ENCODE measurements at regions of chr4 and their contacts with region 1.

Region 1: GRCh38 chr4:53576676-53577372 is 14.5 kb downstream of the LNX1 start:
- DNase-seq: peak; percentile 90
- ATAC-seq: peak; percentile 76
- H3K4me3 ChIP-seq: no peak overlapping the region
- H3K27ac ChIP-seq: peak overlapping the region; percentile 100
- H3K4me1 ChIP-seq: peaks cover 32% of the 10 kb centered on the region
- H3K27me3 ChIP-seq: no peaks in the 10 kb centered on the region
- CTCF ChIP-seq: no peak
- POLR2A ChIP-seq: no peak
- RAD21 ChIP-seq: no peak

Region 2: DNA sequence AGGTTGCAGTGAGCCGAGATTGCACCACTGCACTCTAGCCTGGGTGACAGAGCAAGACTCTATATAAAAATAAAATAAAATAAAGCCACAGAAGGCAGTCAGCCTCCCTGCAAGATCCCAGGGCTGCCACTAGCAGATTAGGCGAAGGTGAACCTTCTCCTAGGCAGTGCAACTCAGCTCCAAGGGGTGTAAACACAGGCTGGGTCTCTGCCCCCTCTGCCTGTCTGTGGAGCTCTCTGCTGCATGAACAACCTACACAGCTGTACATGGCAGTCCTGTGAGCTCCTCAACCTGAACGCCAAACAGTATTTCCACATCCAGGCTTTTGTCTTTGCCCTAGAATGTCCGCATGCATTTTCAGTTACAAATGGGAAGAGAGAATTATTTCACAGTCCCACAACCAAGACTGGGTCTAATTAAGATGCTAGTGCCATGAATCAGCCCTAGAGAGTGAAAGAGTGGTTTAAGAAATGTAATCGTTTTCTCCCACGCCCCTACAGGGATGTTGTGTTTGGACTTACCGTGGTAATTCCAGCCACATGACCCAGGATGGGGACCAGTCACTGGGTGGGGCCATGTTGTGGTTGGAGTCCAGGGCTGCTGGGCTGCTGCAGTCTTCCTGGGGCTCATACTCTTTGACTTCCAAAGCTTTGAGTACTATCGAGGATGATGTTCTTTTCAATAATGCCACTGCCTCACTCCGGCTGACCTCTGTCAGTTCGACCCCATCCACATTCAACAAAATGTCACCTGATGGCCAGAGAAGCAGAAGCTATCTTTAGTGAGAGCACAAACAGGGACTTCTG is 100.4 kb before region 1 on chr4:
- CTCF ChIA-PET with region 1: interaction called, 3 read pairs
- POLR2A ChIA-PET with region 1: no interaction called
- dilution Hi-C with region 1: no loop called
- in situ Hi-C with region 1: no loop called
- intact Hi-C with region 1: loop called (anchors 5 kb)
- DNase-seq: peak; percentile 98
- ATAC-seq: peak; percentile 87
- H3K4me3 ChIP-seq: no peak overlapping the region
- H3K27ac ChIP-seq: peak overlapping the region; percentile 93
- H3K4me1 ChIP-seq: peaks cover 20% of the 10 kb centered on the region
- H3K27me3 ChIP-seq: no peaks in the 10 kb centered on the region
- CTCF ChIP-seq: no peak
- POLR2A ChIP-seq: no peak
- RAD21 ChIP-seq: no peak

Region 3: GRCh38 chr4:53490965-53491622 is 85.7 kb before region 1 on chr4:
- CTCF ChIA-PET with region 1: no interaction called
- POLR2A ChIA-PET with region 1: no interaction called
- dilution Hi-C with region 1: no loop called
- in situ Hi-C with region 1: no loop called
- intact Hi-C with region 1: loop called (anchors 5 kb)
- DNase-seq: peak; percentile 93
- ATAC-seq: peak; percentile 80
- H3K4me3 ChIP-seq: no peak overlapping the region
- H3K27ac ChIP-seq: peak overlapping the region; percentile 93; the same call in 1 of the 2 replicates
- H3K4me1 ChIP-seq: peaks cover 11% of the 10 kb centered on the region
- H3K27me3 ChIP-seq: no peaks in the 10 kb centered on the region
- CTCF ChIP-seq: peak; percentile 71
- POLR2A ChIP-seq: no peak
- RAD21 ChIP-seq: peak; percentile 70

Region 4: DNA sequence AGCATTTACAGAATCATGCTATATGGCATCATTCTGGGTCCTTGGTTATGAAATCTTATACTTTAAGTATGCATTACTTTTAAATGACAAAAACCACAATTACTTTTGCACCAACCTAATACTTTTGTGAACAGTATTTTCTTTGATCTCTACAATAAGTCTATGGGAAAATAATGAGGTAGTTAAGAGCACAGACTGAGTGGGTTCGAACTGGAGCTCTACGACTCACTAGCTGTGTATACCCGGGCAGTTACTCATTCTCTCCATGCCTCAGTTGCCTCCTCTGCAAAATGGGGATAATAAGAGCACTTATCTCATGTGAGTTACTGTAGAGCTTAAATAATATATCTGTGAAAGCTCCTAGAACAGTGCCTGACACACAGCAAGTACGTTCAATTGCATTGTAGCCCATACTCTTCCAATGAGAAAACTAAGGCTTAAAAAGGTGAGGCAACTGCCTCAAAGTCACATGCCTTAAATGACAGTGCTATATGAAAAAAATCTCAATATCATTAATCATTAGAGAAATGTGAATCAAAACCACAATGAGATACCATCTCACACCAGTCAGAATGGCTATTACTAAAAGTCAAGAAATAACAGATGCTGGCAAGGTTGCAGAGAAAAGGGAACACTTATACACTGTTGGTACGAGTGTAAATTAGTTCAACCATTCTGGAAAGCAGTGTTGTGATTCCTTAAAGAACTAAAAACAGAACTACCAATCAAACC is 336.1 kb after region 1 on chr4:
- CTCF ChIA-PET with region 1: no interaction called
- POLR2A ChIA-PET with region 1: no interaction called
- dilution Hi-C with region 1: no loop called
- in situ Hi-C with region 1: no loop called
- intact Hi-C with region 1: no loop called
- DNase-seq: peak; percentile 39
- ATAC-seq: no peak
- H3K4me3 ChIP-seq: no peak overlapping the region
- H3K27ac ChIP-seq: no peak overlapping the region
- H3K4me1 ChIP-seq: peaks cover 16% of the 10 kb centered on the region
- H3K27me3 ChIP-seq: no peaks in the 10 kb centered on the region
- CTCF ChIP-seq: no peak
- POLR2A ChIP-seq: no peak
- RAD21 ChIP-seq: no peak

Region 5: GRCh38 chr4:53997901-53998300 is 421.1 kb after region 1 on chr4:
- CTCF ChIA-PET with region 1: no interaction called
- POLR2A ChIA-PET with region 1: no interaction called
- dilution Hi-C with region 1: no loop called
- in situ Hi-C with region 1: no loop called
- intact Hi-C with region 1: no loop called
- DNase-seq: no peak
- ATAC-seq: no peak
- H3K4me3 ChIP-seq: no peak overlapping the region
- H3K27ac ChIP-seq: no peak overlapping the region
- H3K4me1 ChIP-seq: no peaks in the 10 kb centered on the region
- H3K27me3 ChIP-seq: no peaks in the 10 kb centered on the region
- CTCF ChIP-seq: no peak
- POLR2A ChIP-seq: no peak
- RAD21 ChIP-seq: no peak

Region 6: DNA sequence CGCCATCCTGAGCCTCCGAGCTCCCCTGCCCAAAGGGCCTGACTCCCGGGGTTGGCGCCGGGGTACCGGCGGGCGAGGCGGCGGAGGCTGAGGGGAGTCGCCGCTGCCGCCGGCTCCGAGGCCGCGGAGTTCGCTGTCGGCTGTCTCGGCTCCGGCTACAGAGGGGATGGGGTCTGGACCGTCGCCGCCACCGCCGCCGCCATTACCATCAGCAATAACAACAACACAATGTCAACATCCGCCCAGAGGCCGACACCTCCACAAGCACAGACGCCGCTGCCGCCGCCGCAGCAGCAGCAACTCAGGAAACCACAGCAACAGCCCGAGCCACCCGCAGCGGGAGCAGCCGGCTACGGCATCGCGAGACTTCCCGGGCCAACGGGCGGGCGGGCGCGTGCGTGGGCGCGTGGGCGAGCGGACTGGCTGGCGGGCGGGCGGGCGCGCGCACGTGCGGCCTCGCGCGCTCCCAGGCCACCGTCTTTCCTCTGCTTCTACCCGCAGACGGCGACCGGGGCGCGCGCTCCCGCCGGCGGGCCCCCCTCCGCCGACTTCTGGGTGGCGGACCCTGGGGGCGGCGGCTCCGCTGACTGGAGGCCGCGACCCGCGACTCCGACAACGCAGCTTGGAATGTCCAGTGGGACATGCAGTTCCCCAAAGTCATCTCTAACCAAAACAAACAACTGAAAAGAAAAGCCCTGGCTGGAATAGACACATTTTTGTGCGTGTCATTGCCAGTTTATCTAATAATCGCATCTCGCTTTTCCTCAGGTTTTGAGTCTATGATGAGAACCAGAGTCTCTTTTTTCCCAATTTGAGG is 487.7 kb after region 1 on chr4 and contains the start of gene CHIC2:
- CTCF ChIA-PET with region 1: no interaction called
- POLR2A ChIA-PET with region 1: no interaction called
- dilution Hi-C with region 1: no loop called
- in situ Hi-C with region 1: no loop called
- intact Hi-C with region 1: no loop called
- DNase-seq: peak; percentile 92
- ATAC-seq: peak; percentile 88
- H3K4me3 ChIP-seq: peak within 1 kb of the TSS; percentile 81
- H3K27ac ChIP-seq: peak within 1 kb of the TSS; percentile 97
- H3K4me1 ChIP-seq: peaks cover 13% of the 10 kb centered on the region; the same call in 1 of the 2 replicates
- H3K27me3 ChIP-seq: no peaks in the 10 kb centered on the region
- CTCF ChIP-seq: no peak
- POLR2A ChIP-seq: peak; percentile 96
- RAD21 ChIP-seq: no peak
- total RNA-seq, gene CHIC2: 26.3 and 65.0 TPM in 2 replicates

Region 7: DNA sequence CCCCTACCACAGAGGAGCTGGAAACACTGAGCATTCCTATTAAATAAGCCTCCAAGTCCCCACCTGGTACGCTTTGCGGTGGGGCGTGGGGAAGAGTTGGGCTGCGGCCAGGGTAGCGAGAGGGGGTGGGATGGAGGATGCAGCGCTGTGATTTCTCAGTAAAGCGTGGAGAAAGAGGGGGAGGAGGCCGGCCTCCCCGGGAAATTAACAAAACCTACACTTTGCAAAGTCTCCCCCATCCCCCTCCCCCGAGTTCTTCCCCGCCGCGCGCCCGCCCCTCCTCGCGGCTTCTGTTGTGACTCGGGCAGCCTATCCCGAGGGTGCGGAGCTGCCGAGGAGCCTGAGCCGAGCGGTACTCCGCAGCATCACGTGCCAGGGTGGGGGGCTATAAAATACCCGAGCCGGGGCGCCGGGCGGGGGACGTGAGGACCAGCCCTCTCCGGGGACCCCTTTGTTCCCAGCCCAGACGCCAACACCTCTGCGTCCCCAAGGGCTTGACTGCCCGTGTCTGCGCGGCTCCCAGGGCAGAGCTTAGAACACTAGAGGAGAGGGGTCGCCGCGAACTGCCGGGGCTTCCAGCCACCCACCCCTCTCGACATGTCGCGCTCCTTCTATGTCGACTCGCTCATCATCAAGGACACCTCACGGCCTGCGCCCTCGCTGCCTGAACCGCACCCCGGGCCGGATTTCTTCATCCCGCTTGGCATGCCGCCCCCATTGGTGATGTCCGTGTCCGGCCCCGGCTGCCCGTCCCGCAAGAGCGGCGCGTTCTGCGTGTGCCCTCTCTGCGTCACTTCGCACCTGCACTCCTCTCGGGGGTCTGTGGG is 523.1 kb after region 1 on chr4 and contains the start of gene GSX2:
- CTCF ChIA-PET with region 1: no interaction called
- POLR2A ChIA-PET with region 1: no interaction called
- dilution Hi-C with region 1: no loop called
- in situ Hi-C with region 1: no loop called
- intact Hi-C with region 1: no loop called
- DNase-seq: no peak
- ATAC-seq: peak; percentile 57
- H3K4me3 ChIP-seq: peak within 1 kb of the TSS; percentile 40
- H3K27ac ChIP-seq: no peak within 1 kb of the TSS
- H3K4me1 ChIP-seq: no peaks in the 10 kb centered on the region
- H3K27me3 ChIP-seq: peaks cover 65% of the 10 kb centered on the region
- CTCF ChIP-seq: no peak
- POLR2A ChIP-seq: no peak
- RAD21 ChIP-seq: no peak
- total RNA-seq, gene GSX2: not detected in 2 replicates

Measured in IMR-90 (cell line).